Psoas muscle (tissue), 8 donors: ENCODE measurements at regions of chr6 and their contacts with region 1.

Region 1: GRCh38 chr6:17361013-17361412 is 32.4 kb upstream of the CAP2 start:
- DNase-seq: no peak
- ATAC-seq: no peak
- H3K4me3 ChIP-seq: no peak overlapping the region
- H3K27ac ChIP-seq: no peak overlapping the region
- H3K4me1 ChIP-seq: no peaks in the 10 kb centered on the region
- H3K27me3 ChIP-seq: no peaks in the 10 kb centered on the region
- CTCF ChIP-seq: no peak

Region 2: GRCh38 chr6:17318435-17319165 is 42.4 kb before region 1 on chr6:
- intact Hi-C with region 1: loop called in 1 of 2 experiments (anchors 5 kb)
- DNase-seq: peak; percentile 57 to 72
- ATAC-seq: peak; percentile 94 to 96 (median 96)
- H3K4me3 ChIP-seq: peak overlapping the region; percentile 11
- H3K27ac ChIP-seq: peak overlapping the region; percentile 95
- H3K4me1 ChIP-seq: peaks cover 18% of the 10 kb centered on the region
- H3K27me3 ChIP-seq: no peaks in the 10 kb centered on the region
- CTCF ChIP-seq: no peak

Region 3: GRCh38 chr6:18126118-18126517 is 765.1 kb after region 1 on chr6:
- intact Hi-C with region 1: no loop called
- DNase-seq: no peak
- ATAC-seq: no peak
- H3K4me3 ChIP-seq: no peak overlapping the region
- H3K27ac ChIP-seq: no peak overlapping the region
- H3K4me1 ChIP-seq: peaks cover 10% of the 10 kb centered on the region
- H3K27me3 ChIP-seq: no peaks in the 10 kb centered on the region
- CTCF ChIP-seq: no peak